ENCODE measurements at regions of chr11 and their contacts with region 1.

Region 1: GRCh38 chr11:10307442-10308207 is 2.8 kb downstream of the ADM start:
- DNase-seq: peak; percentile 90
- H3K4me3 Mint-ChIP-seq: peak overlapping the region; percentile 89
- H3K27ac Mint-ChIP-seq: peak overlapping the region; percentile 71
- H3K4me1 Mint-ChIP-seq: peaks cover 38% of the 10 kb centered on the region
- H3K27me3 Mint-ChIP-seq: peaks cover 42% of the 10 kb centered on the region

Region 2: GRCh38 chr11:9573052-9573774 is 734.4 kb before region 1 on chr11 and contains the start of gene WEE1:
- CTCF ChIA-PET with region 1: no interaction called
- POLR2A ChIA-PET with region 1: interaction called, 3 read pairs
- intact Hi-C with region 1: loop called (anchors 1 kb)
- DNase-seq: peak; percentile 99
- H3K4me3 Mint-ChIP-seq: peak within 1 kb of the TSS; percentile 97
- H3K27ac Mint-ChIP-seq: peak within 1 kb of the TSS; percentile 82
- H3K4me1 Mint-ChIP-seq: peaks cover 36% of the 10 kb centered on the region
- H3K27me3 Mint-ChIP-seq: no peaks in the 10 kb centered on the region
- total RNA-seq, gene WEE1: 47.8 to 52.4 TPM

Region 3: GRCh38 chr11:9757809-9758636 is 549.6 kb before region 1 on chr11:
- CTCF ChIA-PET with region 1: interaction called, 43 read pairs
- POLR2A ChIA-PET with region 1: interaction called, 19 read pairs
- intact Hi-C with region 1: loop called (anchors 1 kb)
- DNase-seq: peak; percentile 95
- H3K4me3 Mint-ChIP-seq: peak overlapping the region; percentile 75
- H3K27ac Mint-ChIP-seq: peak overlapping the region; percentile 79
- H3K4me1 Mint-ChIP-seq: peaks cover 34% of the 10 kb centered on the region
- H3K27me3 Mint-ChIP-seq: no peaks in the 10 kb centered on the region

Region 4: GRCh38 chr11:9784602-9785315 is 522.9 kb before region 1 on chr11:
- CTCF ChIA-PET with region 1: no interaction called
- POLR2A ChIA-PET with region 1: no interaction called
- intact Hi-C with region 1: no loop called
- DNase-seq: no peak
- H3K4me3 Mint-ChIP-seq: no peak overlapping the region
- H3K27ac Mint-ChIP-seq: no peak overlapping the region
- H3K4me1 Mint-ChIP-seq: no peaks in the 10 kb centered on the region
- H3K27me3 Mint-ChIP-seq: no peaks in the 10 kb centered on the region

Region 5: GRCh38 chr11:9972989-9973388 is 334.6 kb before region 1 on chr11:
- CTCF ChIA-PET with region 1: interaction called, 12 read pairs
- POLR2A ChIA-PET with region 1: no interaction called
- intact Hi-C with region 1: loop called (anchors 1 kb)
- DNase-seq: peak; percentile 28
- H3K4me3 Mint-ChIP-seq: no peak overlapping the region
- H3K27ac Mint-ChIP-seq: no peak overlapping the region
- H3K4me1 Mint-ChIP-seq: no peaks in the 10 kb centered on the region
- H3K27me3 Mint-ChIP-seq: no peaks in the 10 kb centered on the region

Region 6: DNA sequence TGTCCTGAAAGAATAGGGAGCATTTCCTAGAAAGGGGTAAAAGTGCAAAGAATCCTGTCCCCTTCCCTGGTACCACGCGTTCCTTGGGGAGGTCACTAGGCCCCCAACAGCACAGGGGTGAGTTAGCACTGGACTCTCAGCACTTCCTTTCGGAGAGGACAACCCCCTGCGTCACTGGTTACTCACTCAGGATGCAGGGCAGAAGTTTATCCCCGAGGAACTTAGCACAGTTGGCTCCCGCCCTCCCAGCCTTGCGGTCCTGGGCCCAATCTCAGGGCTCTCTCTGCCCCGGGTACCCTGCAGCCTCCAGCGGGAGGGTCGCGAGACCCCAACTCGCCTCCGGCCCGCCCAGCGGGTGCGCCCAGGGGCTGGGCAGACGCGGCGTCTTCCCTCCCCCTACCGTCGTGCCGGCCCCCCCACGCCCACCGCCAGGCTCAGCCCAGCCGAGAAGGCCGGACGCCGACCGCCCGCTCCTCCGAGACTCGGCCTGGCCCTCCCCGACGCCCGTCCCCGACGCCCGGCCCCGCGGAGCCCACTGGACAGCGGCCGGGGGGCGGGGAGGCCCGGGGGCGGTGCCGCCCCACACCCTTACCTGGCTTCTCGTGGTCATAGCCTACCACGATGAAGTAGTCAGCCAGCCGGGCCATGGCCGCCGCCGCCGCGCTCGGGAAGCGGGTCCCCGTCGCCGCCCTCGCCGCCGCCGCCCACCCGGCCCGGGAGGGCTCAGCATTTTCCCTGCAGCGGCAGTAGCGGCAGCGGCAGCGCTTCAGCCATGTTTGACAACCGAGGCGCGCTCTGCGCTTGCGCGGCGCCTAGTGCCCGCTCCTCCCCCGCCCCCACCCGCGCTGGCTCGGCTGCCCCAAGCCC is 14.0 kb before region 1 on chr11 and contains the start of gene SBF2:
- CTCF ChIA-PET with region 1: interaction called, 58 read pairs
- POLR2A ChIA-PET with region 1: interaction called, 7 read pairs
- intact Hi-C with region 1: loop called (anchors 1 kb)
- DNase-seq: peak; percentile 85
- H3K4me3 Mint-ChIP-seq: peak within 1 kb of the TSS; percentile 74
- H3K27ac Mint-ChIP-seq: no peak within 1 kb of the TSS
- H3K4me1 Mint-ChIP-seq: peaks cover 38% of the 10 kb centered on the region
- H3K27me3 Mint-ChIP-seq: peaks cover 31% of the 10 kb centered on the region
- total RNA-seq, gene SBF2: 7.0 to 7.1 TPM

Region 7: DNA sequence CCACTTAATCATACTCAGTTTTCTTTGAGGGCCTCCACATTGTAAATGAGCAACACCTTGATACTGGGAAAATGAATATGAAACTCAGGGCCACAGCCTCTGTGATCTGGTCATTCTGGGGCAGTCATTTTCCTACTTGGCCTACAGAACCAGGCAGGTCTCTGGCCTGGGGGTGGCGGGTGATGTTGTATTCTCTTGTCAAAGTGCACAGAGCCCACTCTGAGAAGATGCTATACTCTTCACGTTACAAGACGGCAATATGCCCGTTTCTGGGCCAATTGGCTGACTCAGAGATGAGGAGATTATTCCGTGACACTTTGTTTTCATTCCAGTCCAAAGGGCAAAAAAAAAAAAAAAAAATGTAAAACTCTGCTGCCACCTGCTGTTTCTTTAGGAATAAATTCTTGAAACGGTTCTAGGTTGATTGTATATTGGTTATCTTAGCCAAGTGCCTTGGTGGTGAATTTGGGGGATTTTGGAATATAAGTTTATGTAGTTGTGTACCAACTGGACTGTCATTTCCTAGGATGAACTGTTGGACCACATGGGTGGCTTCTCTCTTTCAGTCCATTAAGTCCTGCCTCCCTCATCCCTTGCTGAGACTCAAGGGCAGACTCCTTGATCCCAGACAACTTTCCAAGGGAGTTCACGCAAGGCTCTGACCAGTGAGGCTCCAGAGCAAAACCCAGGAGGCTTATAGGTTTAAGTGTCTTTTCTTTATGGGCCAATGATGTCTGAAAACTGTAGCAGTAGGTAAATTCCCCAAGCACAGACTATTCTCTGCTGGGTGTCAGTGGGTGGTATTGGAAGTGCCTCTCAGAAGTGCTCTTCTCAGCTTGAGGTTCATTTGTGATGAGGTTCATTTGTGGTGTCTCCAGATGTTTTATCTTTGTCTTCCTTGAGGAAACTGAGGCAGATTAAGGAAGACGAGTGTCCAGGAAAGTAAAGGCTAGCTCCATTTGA is 15.5 kb after region 1 on chr11:
- CTCF ChIA-PET with region 1: interaction called, 17 read pairs
- POLR2A ChIA-PET with region 1: interaction called, 3 read pairs
- intact Hi-C with region 1: loop called (anchors 1 kb)
- DNase-seq: peak; percentile 67
- H3K4me3 Mint-ChIP-seq: peak overlapping the region; percentile 48
- H3K27ac Mint-ChIP-seq: peak overlapping the region; percentile 77
- H3K4me1 Mint-ChIP-seq: peaks cover 13% of the 10 kb centered on the region
- H3K27me3 Mint-ChIP-seq: peaks cover 7% of the 10 kb centered on the region

Region 8: GRCh38 chr11:10526974-10527918 is 219.6 kb after region 1 on chr11:
- CTCF ChIA-PET with region 1: no interaction called
- POLR2A ChIA-PET with region 1: no interaction called
- intact Hi-C with region 1: no loop called
- DNase-seq: no peak
- H3K4me3 Mint-ChIP-seq: no peak overlapping the region
- H3K27ac Mint-ChIP-seq: peak overlapping the region; percentile 42
- H3K4me1 Mint-ChIP-seq: peaks cover 15% of the 10 kb centered on the region
- H3K27me3 Mint-ChIP-seq: no peaks in the 10 kb centered on the region